HCT116 (cell line): ENCODE measurements at regions of chr2 and their contacts with region 1.

Region 1: GRCh38 chr2:168160897-168161296 is 86.5 kb downstream of the STK39 start:
- DNase-seq: peak; percentile 69
- ATAC-seq: peak; percentile 75
- H3K4me3 ChIP-seq: no peak overlapping the region
- H3K27ac ChIP-seq: no peak overlapping the region
- H3K4me1 ChIP-seq: peaks cover 41 to 92% of the 10 kb centered on the region in 2 experiments
- H3K27me3 ChIP-seq: no peaks in the 10 kb centered on the region
- CTCF ChIP-seq: peak; percentile 30 to 60 (median 57); a peak in 5 of 6 replicates
- POLR2A ChIP-seq: no peak
- RAD21 ChIP-seq: peak; percentile 72

Region 2: GRCh38 chr2:168216351-168217005 is 55.6 kb after region 1 on chr2:
- CTCF ChIA-PET with region 1: no interaction called
- POLR2A ChIA-PET with region 1: no interaction called
- RAD21 ChIA-PET with region 1: no interaction called
- intact Hi-C with region 1: loop called (anchors 1 kb)
- DNase-seq: peak; percentile 97
- ATAC-seq: peak; percentile 86
- H3K4me3 ChIP-seq: peak overlapping the region; percentile 7 to 31; a peak in 2 of 4 replicates
- H3K27ac ChIP-seq: peak overlapping the region; percentile 99
- H3K4me1 ChIP-seq: peaks cover 92 to 100% of the 10 kb centered on the region in 2 experiments
- H3K27me3 ChIP-seq: no peaks in the 10 kb centered on the region
- CTCF ChIP-seq: no peak
- POLR2A ChIP-seq: no peak
- RAD21 ChIP-seq: peak; percentile 33